A549 (cell line): ENCODE measurements at regions of chr19 and their contacts with region 1.

Region 1: GRCh38 chr19:47013041-47013517 is 6.6 kb upstream of the NPAS1 start:
- DNase-seq: peak in 1 of 2 experiments; percentile 83
- ATAC-seq: peak; percentile 94 to 96
- H3K4me3 ChIP-seq: no peak overlapping the region
- H3K27ac ChIP-seq: peak overlapping the region; percentile 47 to 76
- H3K4me1 ChIP-seq: peaks cover 4% of the 10 kb centered on the region; the same call in 1 of the 3 replicates
- CTCF ChIP-seq: peak; percentile 95
- EP300 ChIP-seq: no peak
- POLR2A ChIP-seq: no peak
- RAD21 ChIP-seq: peak; percentile 98

Region 2: GRCh38 chr19:46661020-46661731 is 351.9 kb before region 1 on chr19 and contains the start of gene DACT3:
- CTCF ChIA-PET with region 1: no interaction called
- POLR2A ChIA-PET with region 1: no interaction called
- DNase-seq: peak; percentile 100
- ATAC-seq: peak; percentile 84 to 95
- H3K4me3 ChIP-seq: peak within 1 kb of the TSS; percentile 44
- H3K27ac ChIP-seq: peak within 1 kb of the TSS in 1 of 2 experiments; percentile 38; a peak in 2 of 6 replicates
- H3K4me1 ChIP-seq: peaks cover 20% of the 10 kb centered on the region
- CTCF ChIP-seq: no peak
- EP300 ChIP-seq: no peak
- POLR2A ChIP-seq: no peak
- RAD21 ChIP-seq: no peak
- polyA plus RNA-seq, gene DACT3: 0.13 and 0.36 TPM in 2 replicates

Region 3: DNA sequence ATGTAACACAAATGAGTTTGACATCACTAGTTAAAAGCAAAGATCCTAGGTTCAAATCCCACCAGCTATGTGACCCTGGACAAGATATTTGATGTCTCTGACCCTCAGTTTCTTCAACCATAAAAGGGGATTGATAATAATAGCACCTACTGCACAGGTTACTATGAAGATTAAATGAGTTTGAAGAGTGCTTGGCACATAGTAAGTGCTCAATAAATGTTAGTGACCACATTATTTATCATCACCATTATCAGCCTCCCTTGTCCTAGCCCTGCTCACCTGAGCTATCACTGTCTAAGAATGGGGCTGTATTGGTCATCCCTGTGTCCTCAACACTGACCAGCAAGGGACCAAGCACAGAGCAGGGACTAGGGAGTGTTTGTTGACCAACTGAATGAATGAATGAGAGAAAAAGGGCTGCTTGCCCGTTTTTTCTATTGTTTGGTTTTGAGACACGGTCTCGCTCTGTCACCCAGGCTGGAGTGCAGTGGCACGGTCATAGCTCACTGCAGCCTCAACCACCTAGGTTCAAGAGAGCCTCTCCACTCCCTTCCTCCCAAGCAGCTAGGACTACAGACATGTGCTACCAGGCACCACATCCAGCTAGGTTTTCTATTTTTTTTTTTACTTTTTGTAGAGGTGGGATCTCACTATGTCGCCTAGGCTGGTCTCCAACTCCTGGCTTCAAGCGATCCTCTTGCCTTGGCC is 325.5 kb before region 1 on chr19:
- CTCF ChIA-PET with region 1: no interaction called
- POLR2A ChIA-PET with region 1: no interaction called
- DNase-seq: no peak
- ATAC-seq: no peak
- H3K4me3 ChIP-seq: no peak overlapping the region
- H3K27ac ChIP-seq: no peak overlapping the region
- H3K4me1 ChIP-seq: no peaks in the 10 kb centered on the region
- CTCF ChIP-seq: no peak
- EP300 ChIP-seq: no peak
- POLR2A ChIP-seq: no peak
- RAD21 ChIP-seq: no peak

Region 4: GRCh38 chr19:46954993-46955812 is 57.9 kb before region 1 on chr19:
- CTCF ChIA-PET with region 1: interaction called, 11 read pairs
- POLR2A ChIA-PET with region 1: no interaction called
- DNase-seq: no peak
- ATAC-seq: no peak
- H3K4me3 ChIP-seq: no peak overlapping the region
- H3K27ac ChIP-seq: peak overlapping the region; percentile 2 to 49; a peak in 2 of 6 replicates
- H3K4me1 ChIP-seq: peaks cover 54% of the 10 kb centered on the region
- CTCF ChIP-seq: no peak
- EP300 ChIP-seq: no peak
- POLR2A ChIP-seq: no peak
- RAD21 ChIP-seq: no peak

Region 5: DNA sequence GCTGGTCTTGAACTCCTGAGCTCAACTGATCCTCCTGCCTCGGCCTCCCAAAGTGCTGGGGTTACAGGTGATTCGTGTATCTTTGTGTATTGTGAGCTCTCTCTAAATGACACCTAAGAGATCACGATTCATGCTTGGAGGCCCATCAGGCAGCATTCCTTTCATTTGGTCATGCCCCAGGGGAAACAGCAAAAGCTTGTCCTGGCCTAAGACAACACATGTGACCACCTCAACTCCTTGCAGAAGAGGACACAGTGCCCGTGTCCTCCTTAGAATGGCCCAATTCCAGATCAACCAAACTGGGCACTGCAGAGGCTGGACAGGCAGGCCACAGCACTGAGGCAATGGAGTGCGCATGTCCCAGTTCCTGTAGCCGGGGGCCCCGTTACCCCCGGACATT is 68.0 kb after region 1 on chr19:
- CTCF ChIA-PET with region 1: interaction called, 24 read pairs
- POLR2A ChIA-PET with region 1: no interaction called
- DNase-seq: no peak
- ATAC-seq: no peak
- H3K4me3 ChIP-seq: no peak overlapping the region
- H3K27ac ChIP-seq: no peak overlapping the region
- H3K4me1 ChIP-seq: peaks cover 8% of the 10 kb centered on the region
- CTCF ChIP-seq: no peak
- EP300 ChIP-seq: no peak
- POLR2A ChIP-seq: no peak
- RAD21 ChIP-seq: no peak

Region 6: DNA sequence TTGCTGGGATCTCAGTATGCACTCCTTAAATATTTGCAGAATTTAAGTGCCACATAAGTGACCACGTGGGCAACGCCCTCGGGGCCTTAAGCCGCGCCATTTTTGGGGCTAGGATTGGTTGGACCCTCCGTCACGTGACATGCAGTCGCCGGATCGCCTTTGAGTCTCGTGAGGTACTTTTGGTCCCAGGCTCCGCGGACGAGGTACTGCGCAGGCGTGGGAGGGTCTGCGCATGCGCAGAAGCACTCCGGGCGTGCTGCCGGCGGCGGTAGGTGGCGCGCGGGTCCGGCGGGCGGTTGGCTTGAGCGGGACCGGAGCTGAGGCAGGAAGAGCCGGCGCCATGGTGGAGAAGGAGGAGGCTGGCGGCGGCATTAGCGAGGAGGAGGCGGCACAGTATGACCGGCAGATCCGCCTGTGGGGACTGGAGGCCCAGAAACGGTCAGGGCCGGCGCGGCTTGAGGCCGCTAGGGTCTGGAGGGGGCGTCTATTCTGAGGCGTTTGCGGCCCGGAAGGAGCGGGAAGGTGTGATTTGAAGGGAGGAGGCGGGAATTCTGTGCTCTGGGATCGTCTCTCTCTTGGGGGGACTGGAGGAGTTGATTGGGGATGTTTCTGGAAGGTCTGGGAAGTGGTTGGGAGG is 117.6 kb after region 1 on chr19 and contains the start of gene SAE1:
- CTCF ChIA-PET with region 1: interaction called, 128 read pairs
- POLR2A ChIA-PET with region 1: interaction called, 3 read pairs
- DNase-seq: peak; percentile 100
- ATAC-seq: peak; percentile 91 to 92
- H3K4me3 ChIP-seq: peak within 1 kb of the TSS; percentile 71
- H3K27ac ChIP-seq: peak within 1 kb of the TSS; percentile 92 to 93
- H3K4me1 ChIP-seq: peaks cover 35% of the 10 kb centered on the region
- CTCF ChIP-seq: peak; percentile 50
- EP300 ChIP-seq: no peak
- POLR2A ChIP-seq: peak; percentile 90
- RAD21 ChIP-seq: peak in 1 of 2 experiments; percentile 53; a peak in 2 of 5 replicates
- polyA plus RNA-seq, gene SAE1: 229 and 249 TPM in 2 replicates

Region 7: GRCh38 chr19:47296036-47296435 is 283.0 kb after region 1 on chr19:
- CTCF ChIA-PET with region 1: no interaction called
- POLR2A ChIA-PET with region 1: no interaction called
- DNase-seq: peak; percentile 88
- ATAC-seq: peak; percentile 95 to 99
- H3K4me3 ChIP-seq: no peak overlapping the region
- H3K27ac ChIP-seq: peak overlapping the region; percentile 44 to 59; a peak in 4 of 6 replicates
- H3K4me1 ChIP-seq: peaks cover 5% of the 10 kb centered on the region; the same call in 1 of the 3 replicates
- CTCF ChIP-seq: peak; percentile 98
- EP300 ChIP-seq: no peak
- POLR2A ChIP-seq: no peak
- RAD21 ChIP-seq: peak; percentile 97 to 99